ENCODE measurements at regions of chr14 and their contacts with region 1.

Region 1: DNA sequence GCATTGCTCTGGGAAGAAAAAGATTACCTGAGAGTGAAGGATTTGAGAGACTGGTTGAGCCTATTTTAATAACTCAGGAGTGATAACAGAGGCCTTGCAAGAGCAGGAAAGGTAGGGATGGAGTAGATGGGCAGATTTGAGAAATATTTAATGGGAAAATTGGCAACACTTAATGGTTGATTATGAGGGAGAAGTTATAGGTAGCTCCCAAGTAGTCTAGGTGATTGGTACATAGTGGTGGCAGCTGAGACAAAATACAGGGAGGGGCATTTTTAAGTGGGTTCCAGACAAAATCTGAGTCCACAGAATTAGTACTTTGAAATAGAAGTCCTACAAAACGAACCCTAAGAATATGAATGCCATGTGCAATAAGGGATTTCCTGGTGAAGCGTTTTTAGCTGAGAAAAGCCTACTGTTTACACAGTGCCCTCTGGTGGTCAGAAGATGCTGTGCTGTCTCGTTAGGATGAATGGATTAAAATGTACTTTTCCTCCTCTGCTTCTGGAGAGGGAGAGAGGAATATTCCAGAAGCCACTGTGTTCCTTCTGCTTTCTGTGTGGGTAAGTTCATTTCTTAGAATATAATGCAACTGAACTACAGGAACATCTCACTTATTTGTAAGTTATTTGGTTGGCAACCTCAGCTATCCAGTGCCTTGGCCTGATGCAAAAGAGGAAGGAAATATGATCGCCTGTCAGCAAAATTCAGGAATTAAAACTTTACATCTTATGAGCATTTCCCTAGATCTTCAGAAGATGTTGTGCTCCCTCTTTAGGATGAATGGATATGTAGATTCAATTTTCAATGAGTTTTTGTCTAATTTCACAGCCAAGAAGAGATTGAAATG is 6.5 kb downstream of the ZBTB1 start:
- DNase-seq: peak in 8 of 9 donors; percentile 50 to 73 (median 68)
- ATAC-seq: peak; percentile 87
- H3K4me3 ChIP-seq: no peak overlapping the region
- H3K4me3 Mint-ChIP-seq: peak overlapping the region; percentile 18 to 92 (median 65)
- H3K27ac ChIP-seq: peak overlapping the region; percentile 57
- H3K27ac Mint-ChIP-seq: peak overlapping the region; percentile 64 to 99 (median 91)
- H3K4me1 ChIP-seq: peaks cover 60 to 61% of the 10 kb centered on the region in 2 donors
- H3K4me1 Mint-ChIP-seq: peaks cover 60 to 96% (median 90%) of the 10 kb centered on the region in 7 donors
- H3K27me3 ChIP-seq: no peaks in the 10 kb centered on the region
- H3K27me3 Mint-ChIP-seq: no peaks in the 10 kb centered on the region

Region 2: GRCh38 chr14:64095620-64096019 is 415.4 kb before region 1 on chr14:
- CTCF ChIA-PET with region 1: no interaction called
- POLR2A ChIA-PET with region 1: no interaction called
- intact Hi-C with region 1: no loop called
- DNase-seq: no peak
- ATAC-seq: no peak
- H3K4me3 ChIP-seq: no peak overlapping the region
- H3K4me3 Mint-ChIP-seq: no peak overlapping the region
- H3K27ac ChIP-seq: no peak overlapping the region
- H3K27ac Mint-ChIP-seq: no peak overlapping the region
- H3K4me1 ChIP-seq: no peaks in the 10 kb centered on the region
- H3K4me1 Mint-ChIP-seq: peaks cover 0 to 2% (median 0%) of the 10 kb centered on the region in 7 donors
- H3K27me3 ChIP-seq: no peaks in the 10 kb centered on the region
- H3K27me3 Mint-ChIP-seq: no peaks in the 10 kb centered on the region

Region 3: GRCh38 chr14:64423987-64424386 is 87.1 kb before region 1 on chr14:
- CTCF ChIA-PET with region 1: interaction called, 40 read pairs
- POLR2A ChIA-PET with region 1: interaction called, 7 read pairs
- intact Hi-C with region 1: no loop called
- DNase-seq: no peak
- ATAC-seq: no peak
- H3K4me3 ChIP-seq: no peak overlapping the region
- H3K4me3 Mint-ChIP-seq: no peak overlapping the region
- H3K27ac ChIP-seq: no peak overlapping the region
- H3K27ac Mint-ChIP-seq: no peak overlapping the region
- H3K4me1 ChIP-seq: no peaks in the 10 kb centered on the region
- H3K4me1 Mint-ChIP-seq: peaks cover 0 to 4% (median 0%) of the 10 kb centered on the region in 7 donors
- H3K27me3 ChIP-seq: no peaks in the 10 kb centered on the region
- H3K27me3 Mint-ChIP-seq: no peaks in the 10 kb centered on the region

Region 4: GRCh38 chr14:64465191-64465822 is 45.7 kb before region 1 on chr14 and contains the start of gene AKAP5:
- CTCF ChIA-PET with region 1: interaction called, 10 read pairs
- POLR2A ChIA-PET with region 1: interaction called, 17 read pairs
- intact Hi-C with region 1: loop called (anchors 1 to 2 kb)
- DNase-seq: peak; percentile 49 to 71 (median 60)
- ATAC-seq: peak; percentile 92
- H3K4me3 ChIP-seq: peak within 1 kb of the TSS; percentile 66
- H3K4me3 Mint-ChIP-seq: peak within 1 kb of the TSS; percentile 83 to 94 (median 90)
- H3K27ac ChIP-seq: peak within 1 kb of the TSS; percentile 55
- H3K27ac Mint-ChIP-seq: peak within 1 kb of the TSS; percentile 25 to 92 (median 70)
- H3K4me1 ChIP-seq: peaks cover 12 to 16% of the 10 kb centered on the region in 2 donors
- H3K4me1 Mint-ChIP-seq: peaks cover 23 to 50% (median 41%) of the 10 kb centered on the region in 7 donors
- H3K27me3 ChIP-seq: no peaks in the 10 kb centered on the region
- H3K27me3 Mint-ChIP-seq: peaks cover 0 to 3% (median 0%) of the 10 kb centered on the region in 5 donors
- total RNA-seq, gene AKAP5: 0.11 to 1.7 (median 0.13) TPM

Region 5: GRCh38 chr14:64488590-64489099 is 22.4 kb before region 1 on chr14:
- CTCF ChIA-PET with region 1: interaction called, 7 read pairs
- POLR2A ChIA-PET with region 1: interaction called, 157 read pairs
- intact Hi-C with region 1: loop called in 1 of 2 experiments (anchors 2 kb)
- DNase-seq: no peak
- ATAC-seq: no peak
- H3K4me3 ChIP-seq: no peak overlapping the region
- H3K4me3 Mint-ChIP-seq: no peak overlapping the region
- H3K27ac ChIP-seq: no peak overlapping the region
- H3K27ac Mint-ChIP-seq: peak overlapping the region in 3 of 9 donors; percentile 6 to 81 (median 21)
- H3K4me1 ChIP-seq: peaks cover 0 to 13% of the 10 kb centered on the region in 2 donors
- H3K4me1 Mint-ChIP-seq: peaks cover 22 to 57% (median 42%) of the 10 kb centered on the region in 7 donors
- H3K27me3 ChIP-seq: no peaks in the 10 kb centered on the region
- H3K27me3 Mint-ChIP-seq: no peaks in the 10 kb centered on the region

Measured in naive thymus-derived CD4-positive, alpha-beta T cell (primary cell).